T-cell (primary cell): ENCODE measurements at regions of chr12 and their contacts with region 1.

Region 1: GRCh38 chr12:119528241-119528640 is 65.3 kb upstream of the TMEM233 start:
- DNase-seq: no peak
- ATAC-seq: no peak
- H3K4me3 ChIP-seq: no peak overlapping the region
- H3K4me3 Mint-ChIP-seq: no peak overlapping the region
- H3K27ac ChIP-seq: no peak overlapping the region
- H3K27ac Mint-ChIP-seq: no peak overlapping the region
- H3K4me1 ChIP-seq: no peaks in the 10 kb centered on the region
- H3K4me1 Mint-ChIP-seq: no peaks in the 10 kb centered on the region
- H3K27me3 ChIP-seq: peaks cover 0 to 6% of the 10 kb centered on the region in 2 experiments
- H3K27me3 Mint-ChIP-seq: peaks cover 4% of the 10 kb centered on the region in 2 donors

Region 2: GRCh38 chr12:119512772-119513497 is 15.3 kb before region 1 on chr12:
- CTCF ChIA-PET with region 1: no interaction called
- POLR2A ChIA-PET with region 1: interaction called in 1 of 2 experiments, 12 read pairs
- DNase-seq: no peak
- ATAC-seq: no peak
- H3K4me3 ChIP-seq: no peak overlapping the region
- H3K4me3 Mint-ChIP-seq: no peak overlapping the region
- H3K27ac ChIP-seq: no peak overlapping the region
- H3K27ac Mint-ChIP-seq: no peak overlapping the region
- H3K4me1 ChIP-seq: no peaks in the 10 kb centered on the region
- H3K4me1 Mint-ChIP-seq: no peaks in the 10 kb centered on the region
- H3K27me3 ChIP-seq: peaks cover 0 to 5% of the 10 kb centered on the region in 2 experiments
- H3K27me3 Mint-ChIP-seq: peaks cover 18 to 21% of the 10 kb centered on the region in 2 donors

Region 3: DNA sequence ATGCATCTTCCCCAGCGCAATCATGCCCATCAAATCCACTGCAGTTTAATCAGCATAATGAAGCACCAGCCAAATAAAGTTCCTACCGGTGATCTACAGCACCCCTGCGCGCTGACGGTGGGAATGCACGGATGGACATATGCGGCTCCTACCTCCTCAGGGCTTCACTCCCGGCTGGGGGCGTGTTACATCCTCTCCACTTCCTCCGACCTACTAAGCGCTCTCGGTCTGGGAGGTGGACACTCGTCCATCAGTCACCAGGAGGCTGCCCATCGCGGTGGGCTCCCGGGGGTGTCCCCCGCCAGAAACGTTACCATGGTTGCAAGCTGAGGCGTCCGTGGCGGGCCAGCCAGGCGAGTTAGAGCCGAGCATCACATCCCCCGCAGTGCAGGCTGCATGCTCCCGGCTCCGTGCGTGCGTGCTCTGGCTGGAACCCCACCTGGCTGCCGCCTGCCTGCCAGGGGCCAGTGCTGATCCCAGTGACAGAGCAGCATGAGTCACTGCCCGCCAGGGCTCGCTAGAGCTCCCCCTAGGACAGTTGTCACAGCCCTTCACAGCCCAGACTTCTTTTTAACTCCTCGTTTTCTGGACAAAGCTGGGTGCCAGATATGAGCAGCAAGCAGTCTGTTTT is 275.9 kb after region 1 on chr12:
- CTCF ChIA-PET with region 1: no interaction called
- POLR2A ChIA-PET with region 1: no interaction called
- DNase-seq: no peak
- ATAC-seq: no peak
- H3K4me3 ChIP-seq: no peak overlapping the region
- H3K4me3 Mint-ChIP-seq: no peak overlapping the region
- H3K27ac ChIP-seq: no peak overlapping the region
- H3K27ac Mint-ChIP-seq: no peak overlapping the region
- H3K4me1 ChIP-seq: no peaks in the 10 kb centered on the region
- H3K4me1 Mint-ChIP-seq: peaks cover 0 to 6% (median 3%) of the 10 kb centered on the region in 3 donors
- H3K27me3 ChIP-seq: peaks cover 0 to 3% of the 10 kb centered on the region in 2 experiments
- H3K27me3 Mint-ChIP-seq: no peaks in the 10 kb centered on the region